Transverse colon (tissue), 4 donors: ENCODE measurements at regions of chr5 and their contacts with region 1.

Region 1: GRCh38 chr5:172902497-172903200 is 56.6 kb upstream of the RPL26L1 start:
- DNase-seq: peak; percentile 78
- H3K4me3 ChIP-seq: no peak overlapping the region
- H3K27ac ChIP-seq: peak overlapping the region; percentile 87 to 95 (median 94)
- H3K4me1 ChIP-seq: peaks cover 41 to 61% (median 48%) of the 10 kb centered on the region in 4 donors
- H3K27me3 ChIP-seq: no peaks in the 10 kb centered on the region
- CTCF ChIP-seq: peak; percentile 24 to 42 (median 38)
- EP300 ChIP-seq: peak; percentile 94
- POLR2A ChIP-seq: no peak

Region 2: DNA sequence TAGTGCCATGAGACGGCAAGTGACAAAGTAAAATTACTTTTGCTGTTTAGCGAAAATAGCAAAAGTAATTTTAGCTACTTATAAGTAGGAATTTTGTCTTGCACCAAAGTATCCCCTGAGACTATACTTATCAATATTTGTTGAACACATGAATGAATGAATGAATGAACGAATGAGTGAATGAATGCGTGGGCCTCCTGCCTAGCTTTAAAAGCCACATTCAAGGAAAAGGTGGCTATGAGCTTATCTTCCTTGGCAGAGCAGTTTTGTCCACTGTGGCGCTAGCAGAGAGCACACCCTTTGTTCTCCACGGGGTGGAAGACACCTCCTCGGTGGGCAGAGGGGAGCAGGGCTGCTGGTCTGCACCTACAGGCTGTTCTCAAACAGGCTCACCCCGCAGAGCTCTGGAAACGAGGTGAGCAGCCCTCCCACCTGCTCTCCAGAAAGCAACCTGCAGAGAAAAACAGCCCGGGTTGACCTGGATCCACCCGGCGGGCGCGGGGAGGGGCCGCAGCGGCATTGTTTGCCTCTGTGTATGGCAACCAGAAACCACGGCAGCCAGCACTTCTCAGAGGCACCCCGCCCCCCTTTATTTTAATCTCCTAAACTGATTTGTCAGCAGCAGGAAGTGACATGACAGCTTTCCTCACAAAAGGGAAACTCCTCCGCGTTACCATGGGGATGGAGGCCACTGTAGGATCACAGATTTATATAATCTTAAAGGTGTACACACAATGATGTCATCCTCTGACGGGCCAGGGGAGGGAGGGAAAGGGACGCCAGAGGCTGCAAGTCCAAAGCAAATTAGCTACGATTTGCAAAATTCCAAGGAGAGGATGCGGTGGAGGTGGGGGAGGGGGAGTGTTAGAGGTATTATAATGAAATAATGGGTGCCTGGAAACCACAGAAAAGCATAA is 137.5 kb before region 1 on chr5:
- in situ Hi-C with region 1: no loop called
- intact Hi-C with region 1: loop called (anchors 2 kb)
- DNase-seq: peak; percentile 95
- H3K4me3 ChIP-seq: peak overlapping the region; percentile 8 to 98 (median 20)
- H3K27ac ChIP-seq: peak overlapping the region; percentile 99 to 100 (median 100)
- H3K4me1 ChIP-seq: peaks cover 7 to 45% (median 24%) of the 10 kb centered on the region in 4 donors
- H3K27me3 ChIP-seq: no peaks in the 10 kb centered on the region
- CTCF ChIP-seq: peak in 2 of 5 experiments; percentile 18 to 29
- EP300 ChIP-seq: peak; percentile 86
- POLR2A ChIP-seq: peak; percentile 59

Region 3: DNA sequence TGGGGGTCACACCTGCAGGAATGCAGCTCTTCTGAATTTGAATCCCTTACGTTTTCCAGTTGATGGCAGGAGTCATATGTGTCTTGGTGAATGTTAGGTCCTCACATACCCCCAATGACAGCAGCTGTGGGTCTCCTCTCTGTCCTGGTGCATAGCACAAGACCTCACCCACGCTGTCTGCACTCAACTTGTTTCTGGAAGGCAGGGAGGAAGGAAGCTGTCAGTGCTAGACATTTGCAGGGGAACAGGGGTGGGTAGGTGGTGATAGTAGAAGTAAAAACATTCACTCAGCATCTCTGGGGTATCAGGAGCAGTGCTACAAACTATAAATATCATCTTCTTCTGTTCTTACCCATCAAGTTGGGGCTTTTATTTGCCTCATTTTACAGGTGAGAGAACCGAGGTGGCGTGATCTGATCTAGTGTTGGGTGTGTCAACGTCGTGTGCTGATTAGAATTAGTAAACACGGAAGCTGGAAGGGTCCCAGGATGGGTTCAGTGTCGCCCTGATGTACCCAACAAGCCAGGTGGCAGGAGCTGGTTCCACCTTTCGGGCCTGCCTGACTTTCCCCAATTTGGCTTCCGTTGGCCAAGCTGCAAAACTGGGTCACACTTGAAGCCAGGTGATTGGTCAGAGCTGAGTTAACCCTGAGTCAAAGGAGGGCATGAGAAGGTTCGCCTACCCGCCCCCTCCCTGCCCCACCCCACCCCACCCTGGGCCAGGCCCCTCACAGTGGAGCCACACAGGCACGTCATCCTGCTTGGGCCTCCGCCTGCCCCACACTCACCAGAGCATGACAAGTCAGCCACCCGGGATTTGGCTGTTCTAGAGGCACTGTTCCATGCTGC is 52.8 kb before region 1 on chr5:
- in situ Hi-C with region 1: loop called in 1 of 4 experiments (anchors 10 kb)
- intact Hi-C with region 1: no loop called
- DNase-seq: peak; percentile 77
- H3K4me3 ChIP-seq: no peak overlapping the region
- H3K27ac ChIP-seq: peak overlapping the region; percentile 59 to 83 (median 73)
- H3K4me1 ChIP-seq: peaks cover 25 to 85% (median 67%) of the 10 kb centered on the region in 4 donors
- H3K27me3 ChIP-seq: no peaks in the 10 kb centered on the region
- CTCF ChIP-seq: no peak
- EP300 ChIP-seq: peak; percentile 42
- POLR2A ChIP-seq: no peak

Region 4: DNA sequence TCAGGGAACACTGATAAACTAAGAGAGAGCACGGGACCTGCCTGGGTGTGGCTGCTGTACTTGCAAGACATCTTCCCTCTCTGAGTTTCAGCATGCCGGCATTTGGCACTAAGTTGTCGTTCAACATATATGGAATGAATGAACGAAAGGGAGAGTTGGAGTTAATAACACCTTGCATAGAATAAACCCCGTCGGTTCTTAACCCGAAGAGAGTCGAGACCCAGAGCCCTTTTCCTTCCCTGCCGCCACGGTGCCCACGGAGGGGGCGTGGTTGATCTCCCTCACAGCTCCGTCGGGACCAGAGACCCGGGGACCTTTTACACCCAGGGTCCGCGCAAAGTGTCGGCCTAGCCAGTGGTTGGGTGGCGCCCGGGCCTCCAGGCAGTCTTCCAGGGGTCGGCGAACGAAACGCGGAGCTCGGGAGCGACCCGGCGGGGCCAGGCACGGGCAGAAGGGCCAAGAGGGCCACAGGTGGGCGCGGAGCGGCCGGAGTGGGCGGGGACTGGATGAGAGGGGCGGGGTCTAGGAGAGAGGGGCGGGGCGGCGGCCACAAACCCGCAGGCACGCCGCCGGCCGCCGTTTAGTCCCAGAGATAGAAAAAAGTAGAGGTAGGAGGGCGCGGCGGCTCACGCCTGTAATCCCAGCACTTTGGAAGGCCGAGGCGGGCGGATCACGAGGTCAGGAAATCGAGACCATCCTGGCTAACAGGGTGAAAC is 55.8 kb after region 1 on chr5:
- in situ Hi-C with region 1: no loop called
- intact Hi-C with region 1: loop called (anchors 2 kb)
- DNase-seq: peak; percentile 78
- H3K4me3 ChIP-seq: peak overlapping the region; percentile 53 to 99 (median 67)
- H3K27ac ChIP-seq: peak overlapping the region; percentile 84 to 90 (median 86)
- H3K4me1 ChIP-seq: peaks cover 7 to 19% (median 14%) of the 10 kb centered on the region in 4 donors
- H3K27me3 ChIP-seq: no peaks in the 10 kb centered on the region
- CTCF ChIP-seq: no peak
- EP300 ChIP-seq: no peak
- POLR2A ChIP-seq: no peak

Region 5: GRCh38 chr5:173472141-173472543 is 569.5 kb after region 1 on chr5:
- in situ Hi-C with region 1: no loop called
- intact Hi-C with region 1: no loop called
- DNase-seq: peak; percentile 26
- H3K4me3 ChIP-seq: no peak overlapping the region
- H3K27ac ChIP-seq: peak overlapping the region; percentile 55 to 81 (median 71)
- H3K4me1 ChIP-seq: peaks cover 6 to 17% (median 8%) of the 10 kb centered on the region in 4 donors
- H3K27me3 ChIP-seq: no peaks in the 10 kb centered on the region
- CTCF ChIP-seq: no peak
- EP300 ChIP-seq: no peak
- POLR2A ChIP-seq: no peak